OCI-LY7 (cell line): ENCODE measurements at regions of chr19 and their contacts with region 1.

Region 1: GRCh38 chr19:47183601-47184000 is 47.4 kb downstream of the BBC3 start:
- DNase-seq: no peak
- H3K4me3 ChIP-seq: no peak overlapping the region
- H3K27ac ChIP-seq: no peak overlapping the region
- H3K4me1 ChIP-seq: peaks cover 18% of the 10 kb centered on the region
- CTCF ChIP-seq: no peak

Region 2: GRCh38 chr19:46944918-46945628 is 238.5 kb before region 1 on chr19:
- CTCF ChIA-PET with region 1: no interaction called
- POLR2A ChIA-PET with region 1: no interaction called
- intact Hi-C with region 1: no loop called
- DNase-seq: no peak
- H3K4me3 ChIP-seq: no peak overlapping the region
- H3K27ac ChIP-seq: no peak overlapping the region
- H3K4me1 ChIP-seq: no peaks in the 10 kb centered on the region
- CTCF ChIP-seq: no peak

Region 3: DNA sequence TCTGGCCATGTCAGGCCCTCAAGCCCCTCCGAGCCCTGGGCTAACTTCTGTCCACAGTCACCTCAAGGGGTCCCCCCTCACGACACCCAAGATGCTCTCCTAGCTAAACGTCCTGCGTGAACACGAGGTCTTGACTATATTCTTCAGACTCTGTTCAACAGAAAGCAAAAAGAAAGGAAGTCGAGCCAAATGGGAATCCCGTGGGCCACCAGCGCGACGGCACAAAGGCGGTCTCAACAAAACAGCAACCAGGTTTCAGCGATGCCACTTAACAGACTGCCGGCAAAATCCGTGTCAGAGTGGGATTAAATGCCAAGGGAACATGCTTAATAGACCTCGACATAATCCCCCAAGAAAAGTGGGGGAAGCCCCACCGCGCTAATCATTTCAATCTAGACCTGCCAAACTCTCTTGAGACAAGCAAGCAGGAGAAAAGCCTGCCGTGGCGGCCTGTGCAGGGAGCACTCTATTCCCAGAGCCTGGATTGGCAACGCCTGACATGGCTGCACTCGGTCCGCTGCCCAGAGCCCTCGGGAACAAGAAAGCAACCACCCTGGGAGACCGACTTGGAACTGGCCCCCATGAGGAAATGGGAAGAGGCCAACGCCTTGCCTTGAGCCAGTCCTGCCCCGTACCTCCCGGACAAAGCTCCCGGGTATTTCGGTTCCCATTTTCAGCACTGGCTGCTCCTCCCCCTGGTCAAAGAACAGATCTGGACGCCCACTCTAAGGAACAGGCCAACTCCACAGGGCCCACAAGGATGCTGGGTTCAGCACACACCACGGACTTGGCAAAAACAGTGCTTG is 86.0 kb before region 1 on chr19:
- CTCF ChIA-PET with region 1: no interaction called
- POLR2A ChIA-PET with region 1: no interaction called
- intact Hi-C with region 1: no loop called
- DNase-seq: no peak
- H3K4me3 ChIP-seq: no peak overlapping the region
- H3K27ac ChIP-seq: no peak overlapping the region
- H3K4me1 ChIP-seq: no peaks in the 10 kb centered on the region
- CTCF ChIP-seq: no peak

Region 4: GRCh38 chr19:47158879-47159503 is 24.6 kb before region 1 on chr19:
- CTCF ChIA-PET with region 1: no interaction called
- POLR2A ChIA-PET with region 1: interaction called, 3 read pairs
- intact Hi-C with region 1: loop called (anchors 2 kb)
- DNase-seq: no peak
- H3K4me3 ChIP-seq: no peak overlapping the region
- H3K27ac ChIP-seq: no peak overlapping the region
- H3K4me1 ChIP-seq: peaks cover 18% of the 10 kb centered on the region
- CTCF ChIP-seq: no peak

Region 5: DNA sequence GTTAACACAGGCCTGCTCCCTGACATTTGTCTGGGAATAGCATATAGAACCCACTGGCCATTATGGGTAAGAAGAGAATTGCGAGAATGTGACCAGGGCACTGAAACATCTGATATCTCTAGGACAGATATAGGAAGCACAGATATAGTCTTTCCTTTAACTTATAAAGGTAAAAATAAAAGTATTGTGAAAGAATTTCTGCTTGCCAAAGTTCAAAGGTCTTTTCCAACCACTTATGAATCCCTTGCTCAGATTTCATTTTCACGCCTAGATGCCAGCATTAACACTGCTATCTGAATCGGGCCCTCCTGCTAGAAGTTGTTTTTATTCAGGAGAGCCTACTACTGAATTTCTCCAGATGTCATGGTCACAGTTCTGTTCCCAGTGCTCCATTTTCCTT is 19.7 kb after region 1 on chr19:
- CTCF ChIA-PET with region 1: no interaction called
- POLR2A ChIA-PET with region 1: no interaction called
- intact Hi-C with region 1: no loop called
- DNase-seq: no peak
- H3K4me3 ChIP-seq: no peak overlapping the region
- H3K27ac ChIP-seq: no peak overlapping the region
- H3K4me1 ChIP-seq: peaks cover 14% of the 10 kb centered on the region
- CTCF ChIP-seq: no peak

Region 6: DNA sequence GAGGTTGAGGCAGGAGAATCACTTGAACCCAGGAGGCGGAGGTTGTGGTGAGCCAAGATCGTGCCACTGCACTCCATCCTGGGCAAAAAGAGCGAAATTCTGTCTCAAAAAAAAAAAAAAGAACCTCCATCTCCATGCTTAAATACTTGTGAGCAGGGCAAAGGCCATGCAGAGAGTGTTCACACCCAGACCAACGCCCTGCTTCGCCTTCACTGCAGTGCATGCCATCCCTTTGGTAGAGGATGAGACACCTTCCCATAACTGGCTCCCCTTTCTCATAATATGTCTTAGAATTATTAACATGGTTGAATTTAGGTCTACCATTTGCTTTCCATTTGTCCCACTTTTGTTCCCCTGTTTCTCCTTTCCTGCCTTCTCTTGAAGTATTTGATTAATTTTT is 32.0 kb after region 1 on chr19:
- CTCF ChIA-PET with region 1: no interaction called
- POLR2A ChIA-PET with region 1: no interaction called
- intact Hi-C with region 1: no loop called
- DNase-seq: no peak
- H3K4me3 ChIP-seq: no peak overlapping the region
- H3K27ac ChIP-seq: no peak overlapping the region
- H3K4me1 ChIP-seq: peaks cover 22% of the 10 kb centered on the region
- CTCF ChIP-seq: no peak